ENCODE measurements at regions of chr5 and their contacts with region 1.

Region 1: DNA sequence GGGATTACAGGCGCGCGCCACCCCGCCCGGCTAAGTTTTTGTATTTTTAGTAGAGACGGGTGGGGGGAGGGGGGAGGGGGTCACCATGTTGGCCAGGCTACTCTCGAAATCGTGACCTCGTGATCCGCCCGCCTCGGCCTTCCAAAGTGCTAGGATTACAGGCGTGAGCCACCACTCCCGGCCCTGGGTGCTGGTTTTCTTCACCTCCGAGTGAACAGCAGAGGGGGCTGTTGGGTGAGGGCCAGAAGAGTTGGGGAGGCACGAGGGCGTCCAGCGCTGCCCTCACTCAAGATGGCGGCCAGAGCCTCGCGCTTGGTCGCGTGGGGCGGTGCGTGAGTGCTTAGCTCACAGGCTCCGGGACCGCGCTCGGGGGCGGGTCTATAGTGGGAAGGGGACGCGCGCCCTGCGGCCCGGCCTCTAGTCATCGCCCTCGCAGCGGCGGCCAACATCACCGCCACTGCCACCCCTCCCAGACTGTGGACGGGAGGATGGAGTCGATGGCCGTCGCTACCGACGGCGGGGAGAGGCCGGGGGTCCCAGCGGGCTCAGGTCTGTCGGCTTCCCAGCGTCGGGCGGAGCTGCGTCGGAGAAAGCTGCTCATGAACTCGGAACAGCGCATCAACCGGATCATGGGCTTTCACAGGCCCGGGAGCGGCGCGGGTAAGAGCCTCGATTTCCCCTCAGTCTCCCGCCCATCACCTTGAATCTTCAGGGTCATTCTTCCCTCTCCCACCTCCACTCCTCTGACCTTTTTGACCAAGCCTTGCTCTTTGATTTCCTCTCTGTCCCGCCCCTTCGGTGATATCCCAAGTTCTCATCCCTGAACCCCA is at the start of gene CAMLG:
- DNase-seq: peak; percentile 94
- ATAC-seq: peak; percentile 97
- H3K4me3 Mint-ChIP-seq: peak within 1 kb of the TSS; percentile 86
- H3K27ac Mint-ChIP-seq: peak within 1 kb of the TSS; percentile 93
- H3K4me1 Mint-ChIP-seq: peaks cover 33% of the 10 kb centered on the region
- H3K27me3 Mint-ChIP-seq: no peaks in the 10 kb centered on the region
- CTCF ChIP-seq: no peak
- total RNA-seq, gene CAMLG: 22.2 and 23.9 TPM in 2 replicates

Region 2: GRCh38 chr5:134176511-134177368 is 561.6 kb before region 1 on chr5 and contains the start of gene SKP1:
- CTCF ChIA-PET with region 1: no interaction called
- POLR2A ChIA-PET with region 1: interaction called, 3 read pairs
- intact Hi-C with region 1: loop called (anchors 1 kb)
- DNase-seq: peak; percentile 91
- ATAC-seq: peak; percentile 86
- H3K4me3 Mint-ChIP-seq: peak within 1 kb of the TSS; percentile 93
- H3K27ac Mint-ChIP-seq: peak within 1 kb of the TSS; percentile 96
- H3K4me1 Mint-ChIP-seq: peaks cover 26% of the 10 kb centered on the region
- H3K27me3 Mint-ChIP-seq: no peaks in the 10 kb centered on the region
- CTCF ChIP-seq: no peak
- total RNA-seq, gene SKP1: 193 and 211 TPM in 2 replicates

Region 3: GRCh38 chr5:134586866-134587524 is 151.4 kb before region 1 on chr5:
- CTCF ChIA-PET with region 1: interaction called, 7 read pairs
- POLR2A ChIA-PET with region 1: no interaction called
- intact Hi-C with region 1: loop called (anchors 1 kb)
- DNase-seq: peak; percentile 79
- ATAC-seq: peak; percentile 91
- H3K4me3 Mint-ChIP-seq: peak overlapping the region; percentile 15
- H3K27ac Mint-ChIP-seq: no peak overlapping the region
- H3K4me1 Mint-ChIP-seq: peaks cover 18% of the 10 kb centered on the region
- H3K27me3 Mint-ChIP-seq: no peaks in the 10 kb centered on the region
- CTCF ChIP-seq: peak; percentile 20

Region 4: DNA sequence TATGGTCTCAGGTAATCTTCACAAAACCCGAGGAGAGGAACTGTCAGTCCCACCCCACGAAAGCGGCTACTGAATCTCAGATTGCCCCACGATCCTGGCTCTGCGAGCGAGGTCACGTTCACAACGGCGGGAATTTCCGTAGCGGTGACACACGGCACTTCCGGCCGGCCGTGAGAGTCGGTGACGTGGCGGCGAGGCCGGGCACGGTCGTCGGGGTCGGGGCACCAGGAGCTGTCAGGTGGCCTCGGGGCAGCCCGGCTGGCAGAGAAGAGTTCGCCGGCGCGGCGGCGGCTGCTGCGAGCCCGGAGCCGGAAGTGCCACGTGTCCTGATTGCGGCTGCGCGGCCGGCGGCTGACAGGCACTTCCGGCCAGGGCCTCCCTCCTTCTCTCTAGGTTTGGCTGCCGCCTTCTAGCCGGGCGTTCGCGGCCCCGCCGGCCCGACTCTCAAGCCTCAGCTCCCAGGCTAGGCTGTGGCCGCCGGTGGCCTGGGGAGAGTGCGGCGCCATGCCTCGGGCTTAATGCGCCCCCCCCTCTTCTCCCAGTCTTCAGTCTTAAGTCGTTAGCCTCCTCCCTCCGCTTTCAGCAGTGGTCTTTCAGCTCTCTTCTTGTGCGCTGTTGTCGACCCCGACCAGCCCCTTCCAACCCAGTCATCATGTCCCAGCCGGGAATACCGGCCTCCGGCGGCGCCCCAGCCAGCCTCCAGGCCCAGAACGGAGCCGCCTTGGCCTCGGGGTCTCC is 89.8 kb before region 1 on chr5 and contains the start of gene SEC24A:
- CTCF ChIA-PET with region 1: no interaction called
- POLR2A ChIA-PET with region 1: no interaction called
- intact Hi-C with region 1: loop called (anchors 2 kb)
- DNase-seq: peak; percentile 86
- ATAC-seq: peak; percentile 77
- H3K4me3 Mint-ChIP-seq: peak within 1 kb of the TSS; percentile 91
- H3K27ac Mint-ChIP-seq: peak within 1 kb of the TSS; percentile 96
- H3K4me1 Mint-ChIP-seq: peaks cover 22% of the 10 kb centered on the region
- H3K27me3 Mint-ChIP-seq: no peaks in the 10 kb centered on the region
- CTCF ChIP-seq: no peak
- total RNA-seq, gene SEC24A: 13.8 and 15.6 TPM in 2 replicates

Region 5: GRCh38 chr5:134845852-134846640 is 107.7 kb after region 1 on chr5 and contains the start of gene C5orf24:
- CTCF ChIA-PET with region 1: interaction called, 4 read pairs
- POLR2A ChIA-PET with region 1: interaction called, 11 read pairs
- intact Hi-C with region 1: loop called (anchors 1 kb)
- DNase-seq: peak; percentile 86
- ATAC-seq: peak; percentile 92
- H3K4me3 Mint-ChIP-seq: peak within 1 kb of the TSS; percentile 83
- H3K27ac Mint-ChIP-seq: peak within 1 kb of the TSS; percentile 95
- H3K4me1 Mint-ChIP-seq: peaks cover 26% of the 10 kb centered on the region
- H3K27me3 Mint-ChIP-seq: no peaks in the 10 kb centered on the region
- CTCF ChIP-seq: no peak
- total RNA-seq, gene C5orf24: 32.0 and 36.1 TPM in 2 replicates

Region 6: GRCh38 chr5:135191084-135191826 is 452.9 kb after region 1 on chr5:
- CTCF ChIA-PET with region 1: interaction called, 3 read pairs
- POLR2A ChIA-PET with region 1: no interaction called
- intact Hi-C with region 1: loop called (anchors 2 kb)
- DNase-seq: peak; percentile 61
- ATAC-seq: peak; percentile 98
- H3K4me3 Mint-ChIP-seq: peak overlapping the region; percentile 78
- H3K27ac Mint-ChIP-seq: no peak overlapping the region
- H3K4me1 Mint-ChIP-seq: peaks cover 7% of the 10 kb centered on the region
- H3K27me3 Mint-ChIP-seq: peaks cover 38% of the 10 kb centered on the region
- CTCF ChIP-seq: peak; percentile 55